ENCODE measurements at regions of chr16 and their contacts with region 1.

Region 1: GRCh38 chr16:83653785-83654184 is 154.0 kb upstream of the HSBP1 start:
- DNase-seq: no peak
- ATAC-seq: no peak
- H3K4me3 ChIP-seq: no peak overlapping the region
- H3K4me3 Mint-ChIP-seq: no peak overlapping the region
- H3K27ac ChIP-seq: no peak overlapping the region
- H3K27ac Mint-ChIP-seq: no peak overlapping the region
- H3K4me1 ChIP-seq: no peaks in the 10 kb centered on the region
- H3K4me1 Mint-ChIP-seq: no peaks in the 10 kb centered on the region
- H3K27me3 ChIP-seq: no peaks in the 10 kb centered on the region
- H3K27me3 Mint-ChIP-seq: peaks cover 3% of the 10 kb centered on the region
- CTCF ChIP-seq: no peak

Region 2: GRCh38 chr16:83599789-83600462 is 53.9 kb before region 1 on chr16:
- CTCF ChIA-PET with region 1: no interaction called
- POLR2A ChIA-PET with region 1: no interaction called
- intact Hi-C with region 1: loop called in 1 of 2 experiments (anchors 2 kb)
- DNase-seq: no peak
- ATAC-seq: no peak
- H3K4me3 ChIP-seq: no peak overlapping the region
- H3K4me3 Mint-ChIP-seq: no peak overlapping the region
- H3K27ac ChIP-seq: no peak overlapping the region
- H3K27ac Mint-ChIP-seq: no peak overlapping the region
- H3K4me1 ChIP-seq: no peaks in the 10 kb centered on the region
- H3K4me1 Mint-ChIP-seq: no peaks in the 10 kb centered on the region
- H3K27me3 ChIP-seq: no peaks in the 10 kb centered on the region
- H3K27me3 Mint-ChIP-seq: peaks cover 13% of the 10 kb centered on the region
- CTCF ChIP-seq: no peak